HepG2 (cell line): ENCODE measurements at regions of chr1 and their contacts with region 1.

Region 1: GRCh38 chr1:40421431-40422384 is 28.6 kb upstream of the ZFP69B start:
- DNase-seq: peak; percentile 99
- ATAC-seq: peak; percentile 96
- H3K4me3 ChIP-seq: peak overlapping the region; percentile 13 to 48 (median 21); a peak in 4 of 6 replicates
- H3K27ac ChIP-seq: peak overlapping the region; percentile 98
- H3K4me1 ChIP-seq: peaks cover 49% of the 10 kb centered on the region
- H3K27me3 ChIP-seq: no peaks in the 10 kb centered on the region
- CTCF ChIP-seq: peak; percentile 30
- EP300 ChIP-seq: peak; percentile 30 to 72; a peak in 3 of 4 replicates
- POLR2A ChIP-seq: peak in 1 of 2 experiments; percentile 59; a peak in 2 of 4 replicates
- RAD21 ChIP-seq: peak; percentile 8; the same call in 1 of the 2 replicates

Region 2: GRCh38 chr1:40373338-40374283 is 48.1 kb before region 1 on chr1 and contains the start of gene SMAP2:
- CTCF ChIA-PET with region 1: no interaction called
- POLR2A ChIA-PET with region 1: interaction called, 11 read pairs
- in situ Hi-C with region 1: no loop called
- intact Hi-C with region 1: no loop called
- DNase-seq: peak; percentile 91
- ATAC-seq: peak; percentile 94
- H3K4me3 ChIP-seq: peak within 1 kb of the TSS; percentile 88 to 94 (median 93)
- H3K27ac ChIP-seq: peak within 1 kb of the TSS; percentile 76
- H3K4me1 ChIP-seq: peaks cover 37% of the 10 kb centered on the region
- H3K27me3 ChIP-seq: no peaks in the 10 kb centered on the region; a peak in 1 of 5 replicates
- CTCF ChIP-seq: no peak
- EP300 ChIP-seq: no peak
- POLR2A ChIP-seq: peak; percentile 32 to 82; a peak in 3 of 4 replicates
- RAD21 ChIP-seq: peak; percentile 35; the same call in 1 of the 2 replicates
- total RNA-seq, gene SMAP2: 19.0 and 21.2 TPM in 2 replicates

Region 3: DNA sequence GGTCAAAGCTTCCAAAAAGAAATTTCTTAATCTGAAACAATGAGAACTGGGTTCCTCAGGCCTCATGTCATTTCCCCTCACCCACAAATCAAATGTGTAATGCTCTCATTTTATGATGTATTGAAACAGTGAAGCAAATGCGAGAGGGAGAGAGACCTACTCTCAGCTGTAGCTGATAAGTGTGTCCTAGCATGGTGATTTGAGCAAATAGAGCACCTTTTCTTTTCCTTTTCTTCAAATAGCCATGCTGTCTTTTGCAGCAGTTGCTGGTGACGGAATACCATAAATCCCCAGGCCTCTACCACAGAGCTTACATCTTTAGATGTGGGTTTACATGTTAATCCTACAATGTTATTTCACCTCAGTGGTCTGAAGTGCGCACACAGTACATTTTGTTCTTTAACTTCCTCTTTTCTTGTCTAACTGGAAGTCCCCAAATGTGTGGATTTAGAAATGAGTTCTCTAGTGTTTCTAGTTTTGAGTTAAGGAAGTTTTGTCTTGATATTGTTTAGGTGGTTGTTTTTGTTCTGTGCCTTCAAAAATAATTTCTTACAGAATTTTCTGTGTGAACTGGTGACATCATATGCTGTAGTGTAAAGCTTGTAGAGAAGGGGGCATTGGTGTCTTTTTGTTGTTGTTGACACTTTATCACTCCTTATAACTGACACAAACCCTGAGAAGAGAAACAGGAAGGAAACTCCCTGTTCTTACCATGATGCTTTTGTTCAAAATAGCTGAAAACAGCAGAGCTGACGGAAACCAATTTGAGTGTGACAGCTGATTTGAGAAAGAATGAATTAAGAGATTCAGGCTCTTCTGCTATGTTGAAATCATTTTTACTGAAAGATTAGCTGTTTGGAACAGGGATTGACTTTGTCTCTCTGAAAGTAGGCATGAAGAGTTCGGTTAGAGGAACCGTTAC is 36.0 kb before region 1 on chr1:
- CTCF ChIA-PET with region 1: no interaction called
- POLR2A ChIA-PET with region 1: interaction called, 14 read pairs
- in situ Hi-C with region 1: no loop called
- intact Hi-C with region 1: no loop called
- DNase-seq: no peak
- ATAC-seq: no peak
- H3K4me3 ChIP-seq: no peak overlapping the region
- H3K27ac ChIP-seq: peak overlapping the region; percentile 81
- H3K4me1 ChIP-seq: peaks cover 92% of the 10 kb centered on the region
- H3K27me3 ChIP-seq: no peaks in the 10 kb centered on the region
- CTCF ChIP-seq: no peak
- EP300 ChIP-seq: no peak
- POLR2A ChIP-seq: no peak
- RAD21 ChIP-seq: no peak

Region 4: DNA sequence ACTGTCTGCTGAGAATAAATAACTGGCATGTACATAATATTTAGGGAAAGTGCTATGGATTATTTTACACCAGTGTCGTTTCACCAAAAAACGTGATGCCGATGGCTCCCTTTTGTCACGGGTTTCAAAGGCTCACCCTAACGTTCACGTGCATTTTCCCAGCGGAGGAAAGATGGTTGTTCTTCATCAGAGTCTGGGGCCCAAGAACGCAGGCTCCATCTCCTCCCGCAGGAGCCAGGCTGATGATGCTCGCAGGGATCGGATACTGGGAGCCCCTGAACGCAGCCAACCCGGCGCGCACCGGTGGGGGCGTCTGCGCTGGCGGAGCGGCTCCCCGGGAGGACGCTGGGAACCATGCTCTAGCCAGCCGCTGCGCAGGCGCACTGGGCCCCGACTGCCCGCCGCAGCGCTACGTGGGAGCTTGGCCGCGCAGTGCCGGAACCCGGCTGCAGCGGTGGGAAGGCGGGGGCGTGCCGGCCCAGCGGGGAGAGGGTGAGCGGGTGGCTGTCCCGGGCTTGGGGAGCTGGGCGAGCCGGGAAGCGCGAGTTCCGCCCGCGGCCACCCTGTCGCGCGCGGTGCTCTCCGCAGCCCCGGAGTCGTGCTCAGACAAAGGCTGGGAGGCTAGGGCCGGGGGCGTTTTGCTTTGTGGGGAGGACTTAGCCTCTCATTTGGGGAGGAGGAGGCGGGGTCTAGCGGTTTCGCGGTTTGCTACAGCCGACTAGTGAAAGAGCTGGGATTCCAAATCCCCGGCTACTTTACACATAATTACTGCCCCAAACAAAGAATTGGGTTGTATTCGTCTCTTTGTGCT is 28.2 kb after region 1 on chr1 and contains the start of gene ZFP69B:
- CTCF ChIA-PET with region 1: no interaction called
- POLR2A ChIA-PET with region 1: interaction called, 21 read pairs
- in situ Hi-C with region 1: no loop called
- intact Hi-C with region 1: loop called (anchors 2 kb)
- DNase-seq: peak; percentile 85
- ATAC-seq: peak; percentile 98
- H3K4me3 ChIP-seq: peak within 1 kb of the TSS; percentile 73 to 87 (median 86)
- H3K27ac ChIP-seq: peak within 1 kb of the TSS; percentile 78
- H3K4me1 ChIP-seq: peaks cover 26% of the 10 kb centered on the region
- H3K27me3 ChIP-seq: no peaks in the 10 kb centered on the region; a peak in 2 of 5 replicates
- CTCF ChIP-seq: peak; percentile 46
- EP300 ChIP-seq: no peak
- POLR2A ChIP-seq: peak; percentile 61 to 83; a peak in 3 of 4 replicates
- RAD21 ChIP-seq: peak; percentile 63
- total RNA-seq, gene ZFP69B: 7.7 and 10.8 TPM in 2 replicates

Region 5: DNA sequence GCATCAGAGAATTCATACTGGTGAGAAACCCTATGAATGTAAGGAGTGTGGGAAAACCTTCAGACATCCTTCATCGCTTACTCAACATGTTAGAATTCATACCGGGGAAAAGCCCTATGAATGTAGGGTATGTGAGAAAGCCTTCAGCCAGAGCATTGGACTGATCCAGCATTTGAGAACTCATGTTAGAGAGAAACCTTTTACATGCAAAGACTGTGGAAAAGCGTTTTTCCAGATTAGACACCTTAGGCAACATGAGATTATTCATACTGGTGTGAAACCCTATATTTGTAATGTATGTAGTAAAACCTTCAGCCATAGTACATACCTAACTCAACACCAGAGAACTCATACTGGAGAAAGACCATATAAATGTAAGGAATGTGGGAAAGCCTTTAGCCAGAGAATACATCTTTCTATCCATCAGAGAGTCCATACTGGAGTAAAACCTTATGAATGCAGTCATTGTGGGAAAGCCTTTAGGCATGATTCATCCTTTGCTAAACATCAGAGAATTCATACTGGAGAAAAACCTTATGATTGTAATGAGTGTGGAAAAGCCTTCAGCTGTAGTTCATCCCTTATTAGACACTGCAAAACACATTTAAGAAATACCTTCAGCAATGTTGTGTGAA is 41.4 kb after region 1 on chr1:
- CTCF ChIA-PET with region 1: no interaction called
- POLR2A ChIA-PET with region 1: no interaction called
- in situ Hi-C with region 1: no loop called
- intact Hi-C with region 1: no loop called
- DNase-seq: no peak
- ATAC-seq: no peak
- H3K4me3 ChIP-seq: no peak overlapping the region
- H3K27ac ChIP-seq: no peak overlapping the region
- H3K4me1 ChIP-seq: no peaks in the 10 kb centered on the region
- H3K27me3 ChIP-seq: no peaks in the 10 kb centered on the region
- CTCF ChIP-seq: no peak
- EP300 ChIP-seq: no peak
- POLR2A ChIP-seq: no peak
- RAD21 ChIP-seq: no peak